Posterior vena cava (tissue), 2 donors: ENCODE measurements at regions of chr21 and their contacts with region 1.

Region 1: GRCh38 chr21:40300298-40300697 is 433.1 kb downstream of the PCP4 start:
- DNase-seq: no peak

Region 2: DNA sequence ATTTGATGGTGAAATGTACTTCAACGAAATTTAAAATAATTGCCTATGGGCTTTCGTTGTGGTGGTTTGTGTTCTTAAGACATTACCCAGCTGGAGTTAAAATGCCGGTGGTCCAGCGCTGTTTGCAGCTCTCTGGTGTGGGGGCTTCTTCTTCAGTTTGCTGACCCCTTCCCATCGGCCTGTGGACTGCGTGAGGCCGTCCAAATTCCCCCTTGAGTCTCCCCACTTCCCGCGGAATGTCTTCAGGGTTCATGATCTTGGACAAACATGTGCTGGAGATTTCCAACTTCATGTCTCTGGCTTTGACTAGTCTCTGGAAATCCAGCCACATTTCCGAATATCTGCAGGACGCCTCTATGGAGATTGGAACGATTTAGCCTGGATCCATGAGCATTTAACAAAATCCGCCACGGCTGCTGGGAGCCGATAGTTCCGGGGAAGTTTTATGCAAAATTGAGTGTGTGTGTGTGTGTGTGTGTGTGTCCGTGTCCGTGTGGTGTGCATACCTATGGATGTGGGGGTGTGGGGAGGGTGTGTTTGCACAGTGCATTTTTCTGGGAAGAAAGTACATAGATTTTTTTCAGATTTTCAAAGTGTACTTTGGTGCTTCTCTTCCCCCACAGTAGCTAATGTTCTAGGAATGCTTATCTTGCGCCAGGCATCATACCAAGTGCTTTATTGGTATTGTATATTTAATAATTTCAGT is 315.9 kb before region 1 on chr21:
- intact Hi-C with region 1: no loop called
- DNase-seq: no peak

Region 3: DNA sequence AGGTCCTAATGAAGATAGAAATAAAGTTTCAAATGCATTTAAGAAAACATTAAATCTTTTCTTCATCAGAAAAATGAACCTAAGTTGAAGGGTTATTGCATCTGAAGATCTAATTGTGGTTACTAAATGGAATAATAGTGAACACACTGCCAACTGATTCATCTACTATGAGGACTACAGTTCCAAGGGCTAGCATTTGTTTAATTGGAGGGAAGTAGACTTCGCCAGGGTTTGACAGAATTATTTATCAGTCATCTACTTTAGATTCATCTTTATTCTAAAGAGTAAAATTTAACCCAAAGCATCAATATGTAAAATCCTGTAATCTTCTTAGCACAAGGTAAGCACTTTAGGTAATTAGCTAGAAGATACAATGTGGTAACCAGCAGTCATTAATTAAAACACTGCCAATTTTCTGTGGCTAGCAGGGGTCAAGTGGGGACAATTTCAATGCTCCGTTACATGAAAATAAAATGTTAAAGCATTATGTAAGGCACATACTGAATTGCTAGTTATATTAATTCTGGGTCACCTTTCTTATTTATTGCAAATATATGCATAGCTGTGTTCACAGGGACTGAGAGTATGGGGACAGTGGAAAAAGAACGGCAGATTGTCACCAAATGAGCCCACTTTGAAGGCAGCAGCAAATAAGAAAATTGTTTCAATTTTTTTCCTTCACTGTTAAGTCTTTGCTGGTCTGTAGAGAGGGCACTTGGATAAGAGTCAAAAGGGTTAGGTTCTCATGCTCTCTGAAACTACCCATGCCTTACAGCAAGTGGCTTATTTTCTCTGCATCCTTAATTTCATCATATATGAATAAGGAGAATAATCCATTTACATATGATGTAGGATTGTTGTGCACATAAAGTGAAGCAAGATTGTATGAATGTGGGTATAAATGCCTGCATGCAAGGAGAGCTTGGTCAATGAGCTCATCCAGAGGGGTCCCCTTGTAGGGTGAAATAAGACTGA is 17.1 kb before region 1 on chr21:
- intact Hi-C with region 1: no loop called
- DNase-seq: no peak

Region 4: DNA sequence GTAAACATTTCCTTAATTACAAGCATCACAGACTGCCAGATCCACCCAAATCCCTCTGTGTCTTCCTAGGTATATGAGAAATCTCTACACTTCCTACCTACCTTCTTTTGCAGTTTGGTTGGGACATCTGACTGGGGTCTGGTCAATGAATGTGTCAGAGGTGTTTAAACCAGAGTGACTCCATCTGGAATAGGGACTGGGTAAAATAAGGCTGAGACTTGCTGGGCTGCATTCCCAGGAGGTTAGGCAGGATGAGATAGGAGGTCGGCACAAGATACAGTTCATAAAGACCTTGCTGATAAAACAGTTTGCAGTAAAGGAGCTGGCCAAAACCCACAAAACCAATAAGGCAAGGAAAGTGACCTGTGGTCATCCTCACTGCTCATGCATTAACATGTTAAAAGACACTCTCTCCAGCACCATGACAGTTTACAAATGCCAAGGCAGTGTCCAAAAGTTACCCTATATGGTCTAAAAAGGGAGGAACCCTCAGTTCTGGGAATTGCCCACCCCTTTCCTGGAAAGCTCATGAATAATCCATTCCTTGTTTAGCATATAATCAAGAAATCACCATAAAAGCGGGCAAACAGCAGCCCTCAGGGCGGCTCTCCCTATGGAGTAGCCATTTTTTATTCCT is 780.3 kb after region 1 on chr21:
- intact Hi-C with region 1: loop called in 1 of 2 experiments (anchors 5 kb)
- DNase-seq: no peak